Breast epithelium (tissue), 4 donors: ENCODE measurements at regions of chr3 and their contacts with region 1.

Region 1: GRCh38 chr3:60948484-60948883 is 302.8 kb downstream of the FHIT start:
- DNase-seq: no peak
- H3K4me3 ChIP-seq: no peak overlapping the region
- H3K27ac ChIP-seq: no peak overlapping the region
- H3K4me1 ChIP-seq: no peaks in the 10 kb centered on the region
- H3K27me3 ChIP-seq: no peaks in the 10 kb centered on the region
- CTCF ChIP-seq: no peak
- POLR2A ChIP-seq: no peak

Region 2: DNA sequence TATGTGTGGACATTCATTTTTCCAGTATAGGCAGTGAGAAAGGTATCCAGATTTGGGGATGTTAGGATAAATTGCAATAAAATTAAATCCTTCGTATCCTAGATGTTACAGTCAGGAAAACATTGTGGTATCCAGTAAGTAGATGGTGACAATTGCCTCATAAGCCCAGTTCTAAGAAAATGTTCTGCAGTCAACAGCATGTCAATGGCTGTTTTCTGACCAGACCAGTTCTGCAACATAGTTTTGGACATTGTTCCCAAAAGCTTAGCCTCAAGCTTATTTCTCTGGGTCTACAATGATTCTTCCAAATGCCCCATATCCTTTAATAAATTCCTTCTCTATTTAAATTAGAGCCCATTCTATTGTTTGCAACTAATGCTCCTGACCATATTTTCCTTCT is 178.0 kb before region 1 on chr3:
- intact Hi-C with region 1: no loop called
- DNase-seq: peak in 1 of 2 donors; percentile 40
- H3K4me3 ChIP-seq: no peak overlapping the region
- H3K27ac ChIP-seq: peak overlapping the region; percentile 52 to 89
- H3K4me1 ChIP-seq: no peaks in the 10 kb centered on the region
- H3K27me3 ChIP-seq: no peaks in the 10 kb centered on the region
- CTCF ChIP-seq: no peak
- POLR2A ChIP-seq: no peak

Region 3: GRCh38 chr3:60920519-60920918 is 28.0 kb before region 1 on chr3:
- intact Hi-C with region 1: no loop called
- DNase-seq: no peak
- H3K4me3 ChIP-seq: no peak overlapping the region
- H3K27ac ChIP-seq: no peak overlapping the region
- H3K4me1 ChIP-seq: no peaks in the 10 kb centered on the region
- H3K27me3 ChIP-seq: no peaks in the 10 kb centered on the region
- CTCF ChIP-seq: no peak
- POLR2A ChIP-seq: no peak

Region 4: DNA sequence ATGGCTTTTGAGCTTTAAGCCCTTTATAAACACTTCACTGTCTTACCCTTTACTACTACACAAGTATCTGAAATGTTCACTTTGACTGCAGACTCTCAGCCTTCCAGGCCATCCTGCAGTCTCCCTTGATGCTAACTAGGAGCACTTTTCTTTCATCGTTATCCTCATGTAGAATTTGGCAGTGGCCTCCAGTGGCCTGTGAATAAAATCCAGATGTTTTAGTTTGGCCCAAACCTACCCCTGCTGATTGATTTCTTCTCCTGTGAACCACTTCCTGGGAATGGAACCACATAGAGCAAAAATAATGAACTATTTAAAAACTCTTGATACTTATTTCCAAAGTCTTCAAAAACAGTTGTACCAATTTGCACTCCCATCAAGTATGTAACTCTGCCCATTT is 1153.0 kb after region 1 on chr3:
- intact Hi-C with region 1: loop called (anchors 5 kb)
- DNase-seq: no peak
- H3K4me3 ChIP-seq: no peak overlapping the region
- H3K27ac ChIP-seq: no peak overlapping the region
- H3K4me1 ChIP-seq: no peaks in the 10 kb centered on the region
- H3K27me3 ChIP-seq: no peaks in the 10 kb centered on the region
- CTCF ChIP-seq: no peak
- POLR2A ChIP-seq: no peak

Region 5: GRCh38 chr3:62451211-62451892 is 1502.9 kb after region 1 on chr3:
- intact Hi-C with region 1: loop called (anchors 10 kb)
- DNase-seq: no peak
- H3K4me3 ChIP-seq: no peak overlapping the region
- H3K27ac ChIP-seq: no peak overlapping the region
- H3K4me1 ChIP-seq: no peaks in the 10 kb centered on the region
- H3K27me3 ChIP-seq: no peaks in the 10 kb centered on the region
- CTCF ChIP-seq: no peak
- POLR2A ChIP-seq: no peak